Dendritic cell treated with granulocyte-macrophage colony-stimulating factor and Interleukin-4, amounts not matched to agents 40 ng/mL and 50 ng/mL, for 4 days (primary cell): ENCODE measurements at regions of chr22 and their contacts with region 1.

Region 1: DNA sequence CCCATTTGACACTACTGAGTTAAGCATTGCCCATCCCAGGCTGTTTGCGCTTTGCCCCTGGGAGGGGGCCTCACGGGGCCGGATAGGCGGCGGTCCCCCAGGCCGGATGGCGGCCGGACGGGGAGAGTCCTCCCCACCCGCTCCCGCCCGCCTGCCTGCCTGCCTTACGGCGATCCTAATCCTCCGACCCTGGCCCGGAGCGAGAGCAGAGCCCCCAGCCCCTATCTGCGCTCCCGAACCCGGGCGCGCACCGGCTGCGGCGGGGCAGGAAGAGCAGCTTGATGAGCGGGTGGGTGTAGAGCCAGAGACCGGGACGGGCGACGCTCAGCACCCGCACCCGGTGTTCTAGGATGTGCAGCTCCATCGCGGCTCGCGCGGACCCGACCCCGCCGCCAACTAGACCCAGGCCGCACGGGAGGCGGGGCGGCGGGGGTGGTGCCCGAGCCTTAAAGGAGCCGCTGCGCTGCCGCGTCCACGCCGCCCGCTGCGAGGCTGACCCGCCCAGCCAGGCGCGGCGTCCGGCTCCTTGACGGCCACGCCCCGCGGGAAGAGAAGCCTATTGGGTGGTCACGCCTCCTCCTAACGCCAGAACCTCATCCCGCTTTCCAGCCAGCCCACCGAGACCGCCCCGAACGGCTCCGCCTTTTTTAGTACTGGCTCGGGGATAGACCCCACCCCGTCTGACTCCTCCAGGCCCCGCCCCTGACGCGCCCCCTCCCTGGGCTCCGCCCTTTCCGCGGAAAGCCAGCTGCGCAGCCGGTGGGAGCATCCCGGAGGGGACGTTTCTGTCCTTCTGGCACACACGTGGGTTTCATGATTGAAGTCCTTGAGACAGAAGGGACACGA is at the start of gene CASTOR1:
- H3K4me3 Mint-ChIP-seq: peak within 1 kb of the TSS; percentile 79
- H3K27ac Mint-ChIP-seq: peak within 1 kb of the TSS; percentile 90
- H3K4me1 Mint-ChIP-seq: peaks cover 70% of the 10 kb centered on the region
- H3K27me3 Mint-ChIP-seq: peaks cover 2% of the 10 kb centered on the region

Region 2: DNA sequence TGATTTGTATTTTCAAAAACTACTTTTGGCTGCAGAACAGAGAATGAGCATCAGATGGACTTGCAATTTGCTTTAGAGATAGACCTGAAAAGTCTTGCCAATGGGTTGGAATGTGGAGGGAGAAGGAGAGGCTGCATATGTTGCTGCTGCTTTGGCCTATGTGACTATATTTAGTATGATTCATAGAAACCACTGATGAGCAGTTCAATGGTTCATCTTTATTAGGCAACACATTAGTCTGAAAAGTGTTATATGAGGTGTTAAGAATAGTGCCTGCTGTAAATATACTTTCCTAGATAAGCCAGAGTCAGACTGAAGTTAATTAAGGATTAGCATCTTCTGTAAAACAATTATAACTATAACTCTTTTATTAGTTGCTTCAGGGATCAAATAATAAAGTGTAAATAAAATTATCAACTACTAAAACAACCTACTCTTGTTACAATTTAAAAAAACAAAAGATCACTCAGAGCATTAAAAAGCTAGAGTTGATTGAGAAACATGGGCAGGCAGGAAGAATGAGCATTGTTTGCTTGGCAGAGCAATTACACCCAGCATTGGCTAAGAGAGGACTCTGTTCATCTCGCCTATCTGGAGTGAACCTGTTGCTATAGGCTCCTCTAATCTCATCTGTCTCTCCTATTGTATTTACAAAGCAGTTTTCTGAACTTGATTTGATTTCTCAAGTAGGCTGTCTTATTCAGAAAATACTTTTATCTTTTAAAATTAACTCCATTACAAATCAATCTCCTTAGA is 172.8 kb before region 1 on chr22:
- intact Hi-C with region 1: loop called (anchors 10 kb)
- H3K4me3 Mint-ChIP-seq: no peak overlapping the region
- H3K27ac Mint-ChIP-seq: no peak overlapping the region
- H3K4me1 Mint-ChIP-seq: no peaks in the 10 kb centered on the region
- H3K27me3 Mint-ChIP-seq: peaks cover 5% of the 10 kb centered on the region

Region 3: GRCh38 chr22:30262917-30263741 is 26.2 kb before region 1 on chr22:
- intact Hi-C with region 1: loop called (anchors 1 kb)
- H3K4me3 Mint-ChIP-seq: peak overlapping the region; percentile 55
- H3K27ac Mint-ChIP-seq: peak overlapping the region; percentile 22
- H3K4me1 Mint-ChIP-seq: peaks cover 80% of the 10 kb centered on the region
- H3K27me3 Mint-ChIP-seq: peaks cover 13% of the 10 kb centered on the region

Region 4: DNA sequence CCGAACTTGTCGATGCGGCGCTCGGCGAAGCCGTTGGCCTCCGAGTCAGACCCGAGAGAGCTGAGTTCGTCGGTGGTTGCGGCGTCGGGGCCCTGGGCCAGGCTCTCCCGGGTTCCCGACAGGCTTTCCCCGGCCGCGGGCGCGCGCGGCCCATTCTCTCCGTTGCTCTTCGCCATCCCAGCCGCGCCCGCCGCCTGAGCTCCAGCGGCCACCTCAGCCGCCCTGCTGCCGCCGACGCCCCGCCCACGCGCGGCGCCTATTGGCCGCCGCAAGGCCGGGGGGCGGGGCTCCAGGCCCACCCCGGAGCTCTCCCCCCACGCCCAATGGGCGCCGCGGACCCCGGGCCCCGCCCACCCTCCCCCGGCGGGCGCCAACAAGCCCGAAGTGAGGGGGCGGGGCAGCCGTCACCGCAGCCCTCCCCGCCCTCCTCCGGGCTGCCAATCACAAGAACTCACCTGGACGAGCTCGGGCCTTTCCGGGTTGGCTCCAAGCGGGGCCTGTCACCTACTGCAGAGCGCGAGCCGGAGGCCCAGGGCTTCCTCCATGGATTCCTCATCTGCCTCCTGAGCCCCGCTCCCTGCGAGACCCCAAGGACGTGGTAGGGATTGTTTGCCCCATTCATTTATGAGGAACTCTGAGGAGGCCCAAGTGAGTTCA is 37.5 kb after region 1 on chr22 and contains the start of gene TBC1D10A:
- intact Hi-C with region 1: loop called (anchors 2 kb)
- H3K4me3 Mint-ChIP-seq: peak within 1 kb of the TSS; percentile 86
- H3K27ac Mint-ChIP-seq: peak within 1 kb of the TSS; percentile 85
- H3K4me1 Mint-ChIP-seq: peaks cover 48% of the 10 kb centered on the region
- H3K27me3 Mint-ChIP-seq: no peaks in the 10 kb centered on the region

Region 5: GRCh38 chr22:30386960-30387827 is 97.8 kb after region 1 on chr22 and contains the start of gene RNF215:
- intact Hi-C with region 1: loop called (anchors 1 kb)
- H3K4me3 Mint-ChIP-seq: peak within 1 kb of the TSS; percentile 81
- H3K27ac Mint-ChIP-seq: peak within 1 kb of the TSS; percentile 37
- H3K4me1 Mint-ChIP-seq: peaks cover 20% of the 10 kb centered on the region
- H3K27me3 Mint-ChIP-seq: peaks cover 7% of the 10 kb centered on the region